Right cardiac atrium (tissue), 5 donors: ENCODE measurements at regions of chr1 and their contacts with region 1.

Region 1: DNA sequence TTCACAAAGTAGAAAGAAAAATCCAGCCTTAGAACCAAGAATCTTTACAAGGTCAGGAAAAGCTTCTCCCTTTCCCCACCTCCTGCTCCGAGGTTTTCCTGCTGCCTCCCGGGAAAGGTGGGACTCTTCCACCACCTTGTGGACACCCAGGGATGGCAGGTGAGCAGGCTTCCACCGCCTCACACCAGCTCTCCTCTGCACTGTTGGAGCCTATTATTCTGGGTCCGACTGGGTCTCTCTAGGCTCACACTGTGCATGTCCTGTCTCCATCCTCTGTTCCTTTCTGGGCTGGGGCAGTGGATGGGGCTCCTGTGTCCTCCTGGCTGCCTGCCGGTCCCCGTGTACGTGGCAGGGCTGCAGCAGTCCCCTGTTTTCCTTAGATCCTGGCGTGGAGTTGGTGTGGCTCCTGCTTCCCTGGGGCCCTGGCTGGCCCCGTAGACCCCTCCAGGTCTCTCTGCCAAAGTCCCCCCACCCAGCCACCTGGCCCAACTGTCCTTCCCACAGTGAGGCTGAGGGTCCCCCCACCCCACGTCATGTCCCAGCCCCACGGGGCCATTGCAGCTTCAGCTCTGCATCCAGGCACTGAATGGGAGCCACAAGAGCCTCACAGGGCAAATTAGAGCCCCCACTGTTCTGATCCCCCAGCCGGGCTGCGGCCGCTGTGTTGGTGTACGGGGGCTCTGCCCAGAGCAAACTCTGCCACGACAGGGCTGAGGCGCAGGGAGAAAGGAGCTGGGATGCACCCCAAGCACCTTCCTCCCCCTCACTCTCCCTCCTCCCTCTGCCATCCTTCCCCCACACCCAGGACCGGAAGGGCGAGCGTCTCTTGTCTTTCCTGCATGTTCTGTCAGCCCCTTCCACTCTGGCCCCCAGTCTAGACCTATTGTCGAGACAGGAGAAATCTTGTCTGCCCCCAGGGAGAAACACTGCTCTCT is 3.3 kb upstream of the SLC45A1 start:
- DNase-seq: peak; percentile 63 to 87 (median 79)
- ATAC-seq: peak; percentile 62 to 70
- H3K4me3 ChIP-seq: no peak overlapping the region
- H3K27ac ChIP-seq: no peak overlapping the region
- H3K4me1 ChIP-seq: no peaks in the 10 kb centered on the region
- H3K27me3 ChIP-seq: no peaks in the 10 kb centered on the region

Region 2: DNA sequence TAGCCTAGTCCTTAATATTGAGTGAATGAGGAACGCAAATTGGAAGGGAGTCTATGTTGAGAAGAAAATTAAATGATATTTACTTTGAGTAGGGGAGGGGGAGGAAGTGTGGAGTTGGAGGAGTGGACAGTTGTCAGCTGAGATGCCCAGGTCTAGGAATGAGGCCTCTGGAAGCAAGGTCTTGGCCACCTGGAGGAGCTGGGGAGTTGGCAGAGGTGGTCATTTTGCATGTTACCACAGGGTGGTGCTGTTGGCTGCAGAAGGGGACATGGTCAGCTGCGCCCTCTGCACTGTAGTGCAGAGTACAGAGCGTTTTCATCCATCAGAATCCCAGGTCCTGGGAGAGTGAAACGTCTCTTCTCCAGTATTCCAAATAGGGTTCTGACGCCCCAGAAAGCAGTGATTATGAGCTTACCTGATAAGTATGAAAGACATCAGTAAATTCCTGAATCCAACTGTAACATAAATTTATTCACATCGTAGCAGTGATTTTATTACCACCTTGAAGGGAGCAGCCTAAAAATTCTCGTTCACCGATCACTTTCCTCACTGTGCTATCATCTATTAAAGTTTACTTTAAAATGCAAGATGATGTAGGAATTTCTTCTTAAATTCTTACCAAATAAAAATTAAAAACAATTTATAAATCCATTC is 339.3 kb before region 1 on chr1:
- intact Hi-C with region 1: loop called (anchors 5 to 10 kb)
- DNase-seq: peak; percentile 70 to 83 (median 75)
- ATAC-seq: peak; percentile 95
- H3K4me3 ChIP-seq: no peak overlapping the region
- H3K27ac ChIP-seq: no peak overlapping the region
- H3K4me1 ChIP-seq: peaks cover 2% of the 10 kb centered on the region
- H3K27me3 ChIP-seq: no peaks in the 10 kb centered on the region

Region 3: GRCh38 chr1:7989762-7990428 is 324.7 kb before region 1 on chr1:
- intact Hi-C with region 1: loop called in 3 of 4 experiments (anchors 10 kb)
- DNase-seq: peak; percentile 48 to 80 (median 64)
- ATAC-seq: peak; percentile 67 to 85
- H3K4me3 ChIP-seq: no peak overlapping the region
- H3K27ac ChIP-seq: no peak overlapping the region
- H3K4me1 ChIP-seq: no peaks in the 10 kb centered on the region
- H3K27me3 ChIP-seq: no peaks in the 10 kb centered on the region

Region 4: DNA sequence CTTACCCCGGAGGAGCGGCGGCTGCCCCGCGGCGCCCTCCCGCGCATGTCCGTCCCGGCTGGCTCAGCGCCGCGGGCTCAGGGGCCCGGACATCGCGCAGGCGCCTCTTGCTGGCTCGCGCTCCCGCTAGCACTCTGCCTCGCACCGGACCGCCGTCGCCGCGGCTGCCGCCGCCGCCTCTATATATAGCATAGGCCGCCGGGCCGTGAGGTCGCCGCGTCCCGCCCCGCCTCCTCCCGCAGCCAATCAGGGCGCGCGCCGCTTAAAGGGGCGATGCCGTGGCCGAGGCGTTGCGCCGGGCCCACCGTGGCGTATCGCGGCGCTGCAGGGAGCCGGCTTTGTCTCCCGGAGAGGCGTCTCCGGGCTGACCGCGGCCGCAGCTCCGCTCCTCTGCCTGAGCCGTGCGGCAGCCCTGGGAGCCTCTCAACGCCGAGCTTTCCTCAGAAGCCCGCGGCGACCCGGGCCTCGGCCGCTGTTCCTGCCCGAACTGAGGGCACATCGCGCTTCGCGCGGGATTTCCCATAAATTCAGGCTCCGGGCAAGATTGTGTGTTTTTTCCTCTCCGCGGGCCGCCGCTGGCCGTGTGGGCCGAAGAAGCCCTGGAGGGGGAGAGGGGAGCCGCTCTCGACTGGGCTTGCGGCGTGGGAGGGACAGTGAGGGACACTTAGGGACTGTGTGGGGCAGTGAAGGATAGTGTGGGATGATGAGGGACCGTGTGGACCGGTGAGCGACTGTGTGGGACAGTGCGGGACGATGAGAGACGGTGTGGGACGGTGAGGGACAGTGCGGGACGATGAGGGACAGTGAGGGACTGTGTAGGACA is 288.2 kb before region 1 on chr1 and contains the start of gene ERRFI1:
- intact Hi-C with region 1: loop called (anchors 5 kb)
- DNase-seq: peak; percentile 96 to 99 (median 99)
- ATAC-seq: peak; percentile 97 to 98
- H3K4me3 ChIP-seq: peak within 1 kb of the TSS; percentile 88
- H3K27ac ChIP-seq: peak within 1 kb of the TSS; percentile 87
- H3K4me1 ChIP-seq: peaks cover 2% of the 10 kb centered on the region
- H3K27me3 ChIP-seq: no peaks in the 10 kb centered on the region
- total RNA-seq, gene ERRFI1: 9.8 to 16.9 (median 15.0) TPM

Region 5: DNA sequence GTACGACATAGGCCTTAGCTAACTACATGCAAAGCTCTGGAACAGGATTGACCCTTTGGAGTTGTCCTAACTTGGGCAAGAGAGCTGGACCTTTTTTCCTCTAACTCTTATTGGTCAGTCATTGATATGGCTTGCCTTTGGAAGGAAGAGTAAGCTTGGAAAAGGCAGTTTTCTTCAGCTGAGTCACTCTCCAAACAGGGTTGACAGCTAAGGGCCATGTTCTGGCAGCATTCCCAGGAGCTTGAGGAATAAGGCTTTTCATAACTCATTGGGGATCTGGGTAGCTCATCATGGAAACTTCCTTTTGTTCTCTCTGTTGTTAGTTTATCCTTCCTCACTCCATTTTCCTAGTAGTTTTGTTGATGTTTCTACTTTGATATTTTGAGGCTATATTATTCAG is 274.0 kb before region 1 on chr1:
- intact Hi-C with region 1: no loop called
- DNase-seq: peak; percentile 66 to 82 (median 82)
- ATAC-seq: peak; percentile 77 to 94
- H3K4me3 ChIP-seq: no peak overlapping the region
- H3K27ac ChIP-seq: no peak overlapping the region
- H3K4me1 ChIP-seq: no peaks in the 10 kb centered on the region
- H3K27me3 ChIP-seq: no peaks in the 10 kb centered on the region

Region 6: GRCh38 chr1:8116893-8117264 is 197.7 kb before region 1 on chr1:
- intact Hi-C with region 1: loop called in 1 of 4 experiments (anchors 10 kb)
- DNase-seq: peak; percentile 71 to 89 (median 86)
- ATAC-seq: peak; percentile 90 to 94
- H3K4me3 ChIP-seq: no peak overlapping the region
- H3K27ac ChIP-seq: peak overlapping the region; percentile 89
- H3K4me1 ChIP-seq: peaks cover 16% of the 10 kb centered on the region
- H3K27me3 ChIP-seq: no peaks in the 10 kb centered on the region

Region 7: DNA sequence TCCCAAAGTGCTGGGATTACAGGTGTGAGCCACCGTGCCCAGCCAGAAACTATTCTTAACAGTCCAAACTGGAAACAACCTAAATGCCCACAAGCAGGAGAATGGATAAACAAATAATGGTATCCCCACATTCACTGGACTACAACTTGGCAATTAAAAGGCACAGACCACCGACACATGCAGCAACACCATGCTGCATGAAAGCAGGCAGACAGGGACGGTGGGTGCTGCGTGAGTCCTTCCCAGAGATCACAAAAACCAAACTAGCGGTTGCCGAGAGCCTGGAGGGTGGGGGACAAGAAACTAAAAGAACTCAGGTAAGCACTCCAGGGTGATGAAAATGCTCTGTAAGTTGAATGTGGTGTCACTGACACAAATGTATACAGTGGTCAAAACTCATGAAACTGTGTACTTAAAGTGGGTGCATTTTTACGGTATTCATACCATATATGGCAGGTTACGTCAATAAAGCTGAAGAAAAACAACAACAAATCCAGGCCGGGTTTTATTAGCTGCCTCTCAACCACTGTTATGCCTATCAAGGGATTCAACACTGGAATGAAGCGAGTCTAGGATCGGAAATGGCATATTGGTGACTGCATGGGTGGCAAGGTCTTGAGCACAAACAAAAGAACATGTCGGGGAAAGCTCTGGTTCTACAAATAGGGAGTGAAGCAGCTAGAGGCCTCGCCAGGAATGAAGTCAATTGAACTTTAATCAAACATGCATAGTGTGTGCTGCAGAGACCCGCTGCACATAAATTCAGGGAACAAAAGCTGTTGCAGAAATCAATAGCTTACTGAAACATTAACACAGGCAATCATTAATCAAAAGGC is 55.7 kb after region 1 on chr1:
- intact Hi-C with region 1: no loop called
- DNase-seq: no peak
- ATAC-seq: no peak
- H3K4me3 ChIP-seq: no peak overlapping the region
- H3K27ac ChIP-seq: peak overlapping the region; percentile 99
- H3K4me1 ChIP-seq: peaks cover 54% of the 10 kb centered on the region
- H3K27me3 ChIP-seq: no peaks in the 10 kb centered on the region